ENCODE measurements at regions of chr7 and their contacts with region 1.

Region 1: GRCh38 chr7:16918288-16918895 is 36.6 kb upstream of the AGR3 start:
- DNase-seq: no peak
- CTCF ChIP-seq: peak; percentile 58

Region 2: GRCh38 chr7:16786257-16786656 is 132.1 kb before region 1 on chr7:
- CTCF ChIA-PET with region 1: no interaction called
- POLR2A ChIA-PET with region 1: no interaction called
- DNase-seq: no peak
- CTCF ChIP-seq: no peak

Region 3: GRCh38 chr7:16891338-16891737 is 27.1 kb before region 1 on chr7:
- CTCF ChIA-PET with region 1: interaction called, 13 read pairs
- POLR2A ChIA-PET with region 1: no interaction called
- DNase-seq: peak; percentile 8
- CTCF ChIP-seq: peak; percentile 52

Measured in GM10248 (cell line).